Activated naive CD4-positive, alpha-beta T cell treated with anti-CD3 and anti-CD28 coated beads for 36 hours (primary cell): ENCODE measurements at regions of chr3 and their contacts with region 1.

Region 1: DNA sequence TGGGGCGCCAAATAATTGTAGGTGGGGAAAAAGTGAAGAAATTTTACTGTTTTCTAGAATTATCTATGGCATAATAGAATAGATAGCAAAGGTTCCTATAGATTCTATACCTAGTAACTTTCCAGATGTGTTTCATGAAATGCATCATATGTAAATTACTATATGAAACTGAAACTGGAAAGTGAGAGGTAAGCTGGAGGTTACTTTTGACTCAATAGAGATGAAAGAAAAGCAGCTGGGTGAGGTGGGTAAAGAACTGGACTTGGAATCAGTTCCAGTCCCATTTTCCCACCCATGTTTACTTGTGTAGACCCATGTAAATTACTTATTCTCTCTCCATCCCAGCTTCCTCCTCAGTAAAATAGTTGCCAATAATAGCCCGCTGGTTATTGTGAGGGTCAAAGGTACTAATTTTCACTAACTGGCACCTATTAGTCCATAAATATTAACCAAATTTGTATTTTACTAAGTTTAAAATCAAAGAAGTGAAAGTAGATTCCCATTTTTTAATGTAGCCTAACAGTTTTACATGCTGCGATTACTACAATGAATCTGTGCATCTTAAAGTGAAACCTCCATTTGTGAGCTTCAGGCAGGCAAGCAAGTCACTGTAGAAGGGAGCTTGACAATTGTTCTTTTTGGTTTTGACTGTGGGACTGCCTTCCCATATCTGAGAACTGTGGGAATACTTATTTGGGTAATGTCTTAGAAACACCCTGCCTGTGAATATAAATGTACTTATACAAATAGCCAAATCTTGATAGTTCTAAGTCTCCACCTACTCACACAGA is 312.1 kb downstream of the SLC9A9 start:
- DNase-seq: no peak
- H3K4me3 Mint-ChIP-seq: no peak overlapping the region
- H3K27ac Mint-ChIP-seq: no peak overlapping the region
- H3K4me1 Mint-ChIP-seq: peaks cover 21% of the 10 kb centered on the region
- H3K27me3 Mint-ChIP-seq: no peaks in the 10 kb centered on the region

Region 2: DNA sequence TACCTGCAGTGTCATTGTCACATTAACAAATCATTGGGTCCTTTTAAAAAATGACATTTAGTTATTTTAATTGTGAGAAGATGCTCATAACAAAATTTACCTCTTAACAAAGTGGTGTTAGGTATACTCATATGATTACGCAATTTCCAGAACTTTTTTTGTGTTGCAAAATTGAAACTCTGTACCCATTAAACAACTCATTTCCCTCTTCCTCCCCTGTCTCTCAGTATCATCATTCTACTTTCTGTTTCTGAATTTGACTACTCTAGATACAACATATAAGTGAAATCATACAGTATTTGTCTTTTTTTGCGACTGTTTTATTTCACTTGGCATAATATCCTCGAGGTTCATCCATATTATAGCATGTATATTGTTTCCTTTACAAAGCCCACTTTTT is 475.3 kb before region 1 on chr3:
- CTCF ChIA-PET with region 1: no interaction called
- intact Hi-C with region 1: loop called (anchors 1 kb)
- DNase-seq: no peak
- H3K4me3 Mint-ChIP-seq: no peak overlapping the region
- H3K27ac Mint-ChIP-seq: no peak overlapping the region
- H3K4me1 Mint-ChIP-seq: peaks cover 27% of the 10 kb centered on the region
- H3K27me3 Mint-ChIP-seq: no peaks in the 10 kb centered on the region

Region 3: DNA sequence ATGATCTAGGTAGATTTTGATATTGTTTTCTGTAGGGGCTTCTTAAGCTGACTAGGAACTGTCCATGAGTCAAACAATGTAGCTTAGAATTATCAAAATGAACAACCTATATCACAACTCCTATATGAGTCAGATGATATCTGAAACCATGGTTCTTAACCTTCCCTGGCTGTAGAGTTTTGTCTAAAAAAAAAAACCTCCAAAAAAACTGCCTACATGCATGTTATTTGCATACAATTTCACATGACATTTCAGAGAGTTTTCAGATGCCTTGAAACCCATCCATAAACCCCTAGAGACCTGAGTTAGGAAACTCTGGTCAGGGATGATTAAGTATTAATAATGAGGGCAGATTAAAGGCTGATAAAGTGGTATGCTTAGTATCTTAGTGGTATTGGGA is 259.6 kb before region 1 on chr3:
- CTCF ChIA-PET with region 1: no interaction called
- intact Hi-C with region 1: loop called (anchors 5 kb)
- DNase-seq: no peak
- H3K4me3 Mint-ChIP-seq: no peak overlapping the region
- H3K27ac Mint-ChIP-seq: no peak overlapping the region
- H3K4me1 Mint-ChIP-seq: peaks cover 17% of the 10 kb centered on the region
- H3K27me3 Mint-ChIP-seq: no peaks in the 10 kb centered on the region

Region 4: DNA sequence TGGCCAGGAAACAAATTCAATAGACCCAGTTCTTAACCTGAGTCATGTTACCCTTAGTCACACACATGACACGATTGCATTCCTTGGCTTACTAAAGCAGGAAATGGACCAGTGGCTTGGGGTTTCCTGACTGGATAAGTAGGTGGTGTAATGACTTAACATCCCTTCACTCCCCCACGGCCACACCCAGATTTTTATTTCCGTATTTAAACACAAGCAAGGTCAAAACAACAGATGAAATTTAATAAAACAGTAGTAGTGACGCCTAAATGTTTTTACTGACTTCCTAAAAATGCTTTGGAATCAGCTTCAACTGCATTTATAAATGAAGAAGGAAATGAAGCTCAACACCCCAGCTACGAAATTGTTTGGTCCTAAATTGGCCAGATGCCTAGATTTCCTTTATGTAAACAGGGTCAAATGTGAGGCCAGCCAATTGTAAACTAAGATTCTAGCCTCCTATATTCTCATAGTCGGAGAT is 92.3 kb before region 1 on chr3:
- CTCF ChIA-PET with region 1: no interaction called
- intact Hi-C with region 1: loop called (anchors 1 kb)
- DNase-seq: peak; percentile 60
- H3K4me3 Mint-ChIP-seq: no peak overlapping the region
- H3K27ac Mint-ChIP-seq: peak overlapping the region; percentile 10
- H3K4me1 Mint-ChIP-seq: peaks cover 32% of the 10 kb centered on the region
- H3K27me3 Mint-ChIP-seq: no peaks in the 10 kb centered on the region

Region 5: GRCh38 chr3:143751643-143752178 is 215.5 kb after region 1 on chr3:
- CTCF ChIA-PET with region 1: no interaction called
- intact Hi-C with region 1: loop called (anchors 2 kb)
- DNase-seq: peak; percentile 57
- H3K4me3 Mint-ChIP-seq: peak overlapping the region; percentile 56
- H3K27ac Mint-ChIP-seq: peak overlapping the region; percentile 81
- H3K4me1 Mint-ChIP-seq: peaks cover 49% of the 10 kb centered on the region
- H3K27me3 Mint-ChIP-seq: no peaks in the 10 kb centered on the region

Region 6: GRCh38 chr3:143831208-143831607 is 295.0 kb after region 1 on chr3:
- CTCF ChIA-PET with region 1: no interaction called
- intact Hi-C with region 1: loop called (anchors 5 kb)
- DNase-seq: peak; percentile 17
- H3K4me3 Mint-ChIP-seq: no peak overlapping the region
- H3K27ac Mint-ChIP-seq: no peak overlapping the region
- H3K4me1 Mint-ChIP-seq: peaks cover 37% of the 10 kb centered on the region
- H3K27me3 Mint-ChIP-seq: no peaks in the 10 kb centered on the region